MCF 10A (cell line): ENCODE measurements at regions of chr3 and their contacts with region 1.

Region 1: DNA sequence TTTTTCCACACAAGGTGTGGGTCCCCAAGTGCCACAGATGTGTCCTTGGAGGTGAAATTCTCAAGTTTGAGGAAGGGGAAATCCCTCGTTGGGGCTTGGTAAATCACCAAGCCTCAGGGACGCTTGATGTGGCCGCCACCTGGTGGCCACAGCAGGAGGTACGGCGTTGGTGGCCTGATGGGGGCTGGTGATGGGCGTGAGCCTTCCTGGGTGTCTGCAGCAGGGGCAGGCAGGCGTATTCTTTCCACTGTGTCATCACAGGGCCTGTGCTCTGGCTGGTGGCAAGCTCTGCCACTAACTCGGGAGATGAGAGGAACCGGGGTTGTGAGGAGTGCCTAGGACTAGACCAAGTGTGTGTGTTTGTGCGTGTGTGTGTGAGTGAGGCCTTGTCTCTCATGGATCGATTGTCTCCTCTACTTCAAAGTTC is 4.2 kb downstream of the ACOX2 start:
- DNase-seq: peak; percentile 79
- H3K4me3 Mint-ChIP-seq: no peak overlapping the region
- H3K27ac Mint-ChIP-seq: no peak overlapping the region
- H3K4me1 Mint-ChIP-seq: peaks cover 27% of the 10 kb centered on the region
- H3K27me3 Mint-ChIP-seq: no peaks in the 10 kb centered on the region
- CTCF ChIP-seq: peak; percentile 95

Region 2: DNA sequence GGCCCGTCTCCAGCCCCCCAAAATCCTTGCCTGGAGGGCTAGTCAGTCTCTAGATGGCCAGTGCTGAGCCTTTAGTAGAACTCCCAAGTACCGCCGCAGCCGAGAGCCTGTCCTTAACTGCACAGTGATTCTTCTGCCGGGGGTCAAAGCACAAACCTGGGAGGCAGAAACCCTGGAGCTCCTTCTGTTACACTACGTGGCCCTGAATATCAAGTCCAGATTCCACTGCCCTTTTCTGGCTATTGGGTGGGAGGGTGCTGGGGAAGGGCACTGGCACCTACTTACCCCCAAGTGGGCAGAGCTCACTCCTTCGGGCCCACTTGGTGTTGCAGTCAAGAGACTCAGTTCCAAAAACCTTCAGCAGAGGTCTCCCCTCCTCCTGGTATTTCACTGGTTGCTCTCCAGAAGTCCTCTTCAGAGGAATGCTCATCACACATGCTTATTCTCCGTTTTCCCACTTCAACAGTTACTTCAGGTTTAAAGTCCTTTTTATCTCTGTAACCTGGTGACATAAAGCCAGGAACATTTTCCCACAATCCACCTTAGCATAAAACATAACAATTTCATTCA is 110.0 kb before region 1 on chr3:
- CTCF ChIA-PET with region 1: interaction called, 8 read pairs
- POLR2A ChIA-PET with region 1: no interaction called
- intact Hi-C with region 1: loop called (anchors 2 kb)
- DNase-seq: peak; percentile 16
- H3K4me3 Mint-ChIP-seq: no peak overlapping the region
- H3K27ac Mint-ChIP-seq: no peak overlapping the region
- H3K4me1 Mint-ChIP-seq: no peaks in the 10 kb centered on the region
- H3K27me3 Mint-ChIP-seq: no peaks in the 10 kb centered on the region
- CTCF ChIP-seq: peak; percentile 13

Region 3: DNA sequence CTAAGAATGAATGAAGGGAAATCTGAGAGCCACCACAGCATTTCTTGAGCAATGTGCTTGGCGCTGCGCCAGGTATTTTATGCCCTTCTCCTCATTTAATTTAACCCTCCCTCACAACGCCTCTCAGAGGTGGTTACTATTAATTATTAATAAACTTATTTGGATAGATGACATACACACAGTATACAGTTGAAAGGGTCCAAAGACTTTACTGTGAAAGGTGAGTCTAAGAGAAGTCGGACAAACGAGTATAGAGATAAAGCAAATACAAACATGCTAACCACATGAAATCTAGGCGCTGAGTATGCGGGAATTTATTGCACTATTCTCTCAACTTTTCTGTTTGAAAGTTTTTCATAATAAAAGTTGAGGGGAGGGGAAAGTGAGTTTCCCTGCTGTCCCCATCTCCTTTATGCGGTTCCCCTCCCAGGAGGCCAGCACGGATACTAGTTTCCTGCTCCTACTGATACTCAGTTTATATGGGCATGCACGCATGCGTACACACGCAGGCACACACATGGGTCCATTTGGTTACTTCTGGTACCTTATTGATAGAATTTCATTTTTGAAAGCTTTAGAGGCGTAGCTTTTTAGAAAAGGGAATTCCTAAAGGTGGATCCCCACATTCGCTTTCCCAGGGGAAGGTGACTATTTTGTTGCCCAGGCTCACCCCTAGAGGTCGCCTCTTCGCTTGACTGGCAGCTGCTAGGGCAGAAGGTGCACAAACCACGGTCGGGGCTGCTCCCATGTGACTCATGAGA is 69.4 kb before region 1 on chr3:
- CTCF ChIA-PET with region 1: interaction called, 9 read pairs
- POLR2A ChIA-PET with region 1: interaction called, 3 read pairs
- intact Hi-C with region 1: loop called (anchors 1 kb)
- DNase-seq: peak; percentile 95
- H3K4me3 Mint-ChIP-seq: no peak overlapping the region
- H3K27ac Mint-ChIP-seq: peak overlapping the region; percentile 71
- H3K4me1 Mint-ChIP-seq: peaks cover 20% of the 10 kb centered on the region
- H3K27me3 Mint-ChIP-seq: no peaks in the 10 kb centered on the region
- CTCF ChIP-seq: peak; percentile 89

Region 4: DNA sequence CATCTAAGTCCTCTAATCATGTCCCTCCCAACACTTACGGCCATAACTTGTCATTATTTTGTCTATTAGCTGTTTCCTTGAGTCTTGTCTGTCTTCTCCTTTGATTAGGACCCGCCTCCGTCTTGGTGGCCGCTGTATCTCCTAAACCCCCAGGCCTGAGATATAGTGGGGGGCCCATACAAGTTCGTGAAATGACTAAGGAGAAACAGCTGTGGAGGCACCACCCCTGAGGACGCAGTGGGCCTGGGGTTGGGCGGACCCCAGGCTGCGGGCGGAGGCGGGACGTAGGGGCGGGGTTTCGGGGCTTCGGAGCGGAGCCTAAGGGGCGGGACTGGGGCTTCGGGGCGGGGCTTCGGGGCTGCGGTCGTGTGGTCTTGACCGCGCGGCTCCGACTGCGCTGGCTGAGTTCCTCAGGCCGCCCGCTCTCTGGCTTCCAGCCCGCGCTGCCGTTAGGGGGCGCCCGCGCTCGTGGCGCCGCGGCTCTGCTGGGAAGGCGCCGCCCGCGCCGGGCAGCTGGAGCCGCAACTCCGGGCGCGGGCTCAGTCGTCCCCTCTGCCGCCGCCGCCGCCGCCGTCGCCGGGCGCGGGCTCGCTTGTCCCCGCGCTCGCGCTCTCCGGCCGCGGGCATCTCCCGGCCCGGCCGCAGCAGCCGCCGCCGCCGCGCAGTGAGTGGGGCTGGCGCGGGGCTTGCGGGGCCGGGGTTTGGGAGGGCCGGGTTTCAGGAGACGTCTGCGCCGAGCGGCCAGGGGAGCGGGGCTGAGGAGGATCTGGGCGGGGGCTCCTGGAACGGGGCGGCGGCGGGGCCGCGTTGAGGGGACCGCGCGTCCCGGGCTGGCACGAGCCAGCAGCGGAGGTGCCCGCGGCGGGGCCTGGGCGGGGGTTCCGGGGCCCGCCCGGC is 41.1 kb before region 1 on chr3 and contains the start of gene KCTD6:
- CTCF ChIA-PET with region 1: interaction called, 59 read pairs
- POLR2A ChIA-PET with region 1: interaction called, 62 read pairs
- intact Hi-C with region 1: loop called (anchors 1 kb)
- DNase-seq: peak; percentile 91
- H3K4me3 Mint-ChIP-seq: peak within 1 kb of the TSS; percentile 78
- H3K27ac Mint-ChIP-seq: peak within 1 kb of the TSS; percentile 50
- H3K4me1 Mint-ChIP-seq: peaks cover 33% of the 10 kb centered on the region
- H3K27me3 Mint-ChIP-seq: no peaks in the 10 kb centered on the region
- CTCF ChIP-seq: peak; percentile 73
- total RNA-seq, gene KCTD6: 9.9 and 10.6 TPM in 2 replicates